ENCODE measurements at regions of chr10 and their contacts with region 1.

Region 1: DNA sequence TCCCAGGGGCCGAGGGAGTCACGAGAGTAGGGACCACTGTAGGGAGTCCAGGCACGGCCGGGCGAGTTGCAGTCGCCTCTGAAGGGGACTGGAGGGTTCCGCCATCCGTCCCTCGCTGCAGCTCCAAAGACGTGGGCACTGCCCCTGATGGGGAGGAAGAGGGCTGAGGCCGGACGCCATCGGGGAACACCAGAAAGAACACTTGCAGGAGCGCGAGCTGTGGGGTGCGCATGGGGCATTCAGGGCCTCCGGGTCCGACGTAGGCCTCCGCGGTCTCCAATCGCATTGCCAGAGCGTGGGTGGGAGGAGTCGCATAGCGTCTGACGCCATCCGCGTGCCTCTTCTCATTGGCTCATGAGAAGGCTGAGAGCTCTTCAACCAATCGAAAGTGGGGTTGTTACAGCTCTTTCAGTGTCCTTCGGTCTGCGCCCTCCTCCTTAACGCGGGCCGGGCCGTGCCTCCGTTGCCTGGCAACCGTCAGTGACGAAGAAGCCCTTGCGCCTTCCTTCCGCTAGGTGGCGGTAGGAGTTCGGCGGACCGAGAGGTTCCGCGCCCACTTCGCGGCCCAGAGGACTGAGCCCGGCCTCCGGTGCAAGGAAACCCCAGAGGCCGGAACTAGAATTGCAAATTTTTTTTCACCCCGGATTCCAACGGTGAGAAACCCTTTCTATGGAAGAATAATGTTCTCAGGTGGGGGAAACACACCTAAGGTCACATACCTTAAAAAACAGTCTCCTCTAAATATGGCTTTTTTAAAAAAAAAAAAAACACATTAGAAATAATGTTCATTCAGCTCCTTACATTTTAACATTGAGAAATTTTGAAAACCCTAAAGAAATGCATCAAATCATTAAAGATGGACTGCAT is at the start of gene TCTN3:
- DNase-seq: peak; percentile 97
- H3K4me3 Mint-ChIP-seq: peak within 1 kb of the TSS; percentile 96
- H3K27ac Mint-ChIP-seq: peak within 1 kb of the TSS; percentile 71
- H3K4me1 Mint-ChIP-seq: peaks cover 35% of the 10 kb centered on the region
- H3K27me3 Mint-ChIP-seq: no peaks in the 10 kb centered on the region
- total RNA-seq, gene TCTN3: 22.9 to 26.3 TPM

Region 2: DNA sequence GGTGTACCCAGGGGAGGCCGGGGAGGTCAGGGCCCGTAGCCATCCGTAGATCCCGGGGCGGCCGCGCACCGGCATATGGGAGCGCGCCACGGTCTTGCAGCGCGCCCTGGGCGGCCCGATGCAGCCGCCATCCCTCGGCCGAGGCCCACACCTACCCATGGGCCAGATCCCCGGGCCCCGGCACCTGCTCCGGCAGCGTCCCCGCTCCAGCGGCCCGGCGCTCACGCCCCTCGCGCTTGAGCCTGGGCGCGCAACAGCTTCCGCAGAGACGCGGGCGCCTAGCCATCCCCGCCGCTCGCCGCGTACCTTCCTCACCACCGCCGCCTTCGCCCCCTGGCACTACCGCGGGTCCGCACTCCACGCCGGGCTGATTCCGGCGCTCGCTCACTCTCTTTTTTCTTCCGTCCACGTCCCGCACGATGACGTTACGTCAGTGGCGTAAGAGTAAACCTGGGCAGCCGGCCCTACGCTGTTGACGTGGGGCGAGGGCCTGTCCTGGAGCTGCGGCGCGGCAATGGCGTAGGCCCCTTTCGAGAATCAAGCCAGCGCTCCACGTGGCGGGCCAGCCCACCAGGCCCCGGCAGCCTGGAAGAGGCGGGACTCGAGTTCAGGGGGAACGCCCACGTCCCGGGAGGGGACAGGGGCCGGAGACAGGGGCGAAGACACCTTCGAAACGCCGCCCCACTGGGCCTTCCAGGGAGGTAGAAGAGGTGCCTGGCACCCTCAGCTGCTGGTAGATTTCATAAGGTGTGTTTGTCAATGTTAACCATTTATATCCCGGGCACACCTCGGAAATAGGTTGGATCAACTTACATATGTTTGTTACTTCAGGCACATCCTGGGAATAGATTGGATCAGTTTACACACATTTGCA is 37.4 kb before region 1 on chr10 and contains the start of gene ALDH18A1:
- CTCF ChIA-PET with region 1: interaction called, 17 read pairs
- POLR2A ChIA-PET with region 1: interaction called, 8 read pairs
- intact Hi-C with region 1: loop called (anchors 1 kb)
- DNase-seq: peak; percentile 93
- H3K4me3 Mint-ChIP-seq: peak within 1 kb of the TSS; percentile 91
- H3K27ac Mint-ChIP-seq: peak within 1 kb of the TSS; percentile 80
- H3K4me1 Mint-ChIP-seq: peaks cover 25% of the 10 kb centered on the region
- H3K27me3 Mint-ChIP-seq: no peaks in the 10 kb centered on the region
- total RNA-seq, gene ALDH18A1: 68.6 to 69.5 TPM

Region 3: DNA sequence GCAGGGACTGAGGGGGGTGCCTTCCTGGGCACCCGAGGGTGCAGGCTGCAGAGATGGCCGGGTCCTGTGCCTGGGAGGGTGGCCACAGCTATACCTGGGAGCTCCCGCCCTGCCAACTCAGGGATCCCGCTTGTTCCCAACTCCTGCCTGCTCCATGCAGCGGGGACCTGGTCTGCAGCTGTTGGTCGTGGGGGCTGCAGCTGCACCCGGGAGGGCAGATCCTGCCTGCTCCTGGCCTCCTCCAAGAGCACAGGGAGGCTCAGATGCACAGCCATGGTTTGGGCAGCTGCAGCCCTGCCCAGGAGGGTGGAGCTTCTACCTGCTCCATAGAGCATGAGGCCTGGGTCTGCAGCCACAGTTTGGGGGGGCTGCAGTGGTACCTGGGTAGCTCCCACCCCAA is 13.1 kb after region 1 on chr10:
- CTCF ChIA-PET with region 1: interaction called, 10 read pairs
- POLR2A ChIA-PET with region 1: no interaction called
- intact Hi-C with region 1: no loop called
- DNase-seq: no peak
- H3K4me3 Mint-ChIP-seq: no peak overlapping the region
- H3K27ac Mint-ChIP-seq: no peak overlapping the region
- H3K4me1 Mint-ChIP-seq: no peaks in the 10 kb centered on the region
- H3K27me3 Mint-ChIP-seq: no peaks in the 10 kb centered on the region

Region 4: GRCh38 chr10:95832216-95833041 is 138.5 kb after region 1 on chr10:
- CTCF ChIA-PET with region 1: interaction called, 298 read pairs
- POLR2A ChIA-PET with region 1: interaction called, 6 read pairs
- intact Hi-C with region 1: loop called (anchors 2 kb)
- DNase-seq: peak; percentile 77
- H3K4me3 Mint-ChIP-seq: peak overlapping the region; percentile 72
- H3K27ac Mint-ChIP-seq: peak overlapping the region; percentile 90
- H3K4me1 Mint-ChIP-seq: peaks cover 37% of the 10 kb centered on the region
- H3K27me3 Mint-ChIP-seq: no peaks in the 10 kb centered on the region

Region 5: DNA sequence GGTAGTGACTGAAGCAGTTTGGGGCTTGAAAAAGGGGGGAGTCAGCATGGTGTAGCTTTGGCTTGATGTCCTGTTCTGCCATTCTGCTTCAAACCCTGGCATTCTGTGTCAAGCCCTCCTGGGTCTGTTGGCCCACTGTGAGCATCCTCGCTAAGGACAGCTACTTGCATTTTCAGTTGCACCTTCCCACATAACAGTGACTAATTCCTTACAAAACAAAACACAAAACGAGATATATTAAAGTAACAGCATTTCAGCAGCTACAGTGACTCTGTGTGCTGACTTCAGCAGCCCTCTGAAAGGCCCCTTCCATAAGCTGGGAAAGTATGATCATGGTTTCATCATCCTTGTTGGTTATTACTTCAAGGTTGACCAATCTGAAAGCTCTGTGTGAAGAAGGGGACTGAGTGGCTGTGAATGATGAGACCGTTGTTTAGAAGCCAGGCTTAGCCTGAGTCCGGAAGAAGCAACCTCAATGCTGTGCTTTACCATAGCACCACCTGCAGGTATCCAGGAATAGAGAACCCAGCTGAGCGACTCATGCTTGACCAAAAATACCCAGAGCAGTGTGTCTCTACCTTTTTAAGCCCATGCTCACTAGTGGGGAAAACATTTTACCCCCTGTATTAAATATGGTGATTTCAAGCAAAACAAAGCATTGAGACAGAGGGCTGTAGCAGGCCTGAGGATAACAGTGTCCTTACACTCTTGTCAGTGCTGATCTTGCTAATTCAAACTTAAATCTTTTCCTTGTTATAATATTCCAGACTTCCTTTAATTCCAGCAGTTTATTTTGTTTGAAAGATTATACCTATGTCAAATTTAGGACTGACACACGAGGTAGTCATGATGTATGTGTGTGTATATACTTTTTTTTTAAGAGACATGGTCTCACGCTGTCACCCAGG is 171.3 kb after region 1 on chr10:
- CTCF ChIA-PET with region 1: interaction called, 99 read pairs
- POLR2A ChIA-PET with region 1: interaction called, 13 read pairs
- intact Hi-C with region 1: loop called (anchors 1 kb)
- DNase-seq: peak; percentile 61
- H3K4me3 Mint-ChIP-seq: no peak overlapping the region
- H3K27ac Mint-ChIP-seq: peak overlapping the region; percentile 12
- H3K4me1 Mint-ChIP-seq: peaks cover 19% of the 10 kb centered on the region
- H3K27me3 Mint-ChIP-seq: no peaks in the 10 kb centered on the region

Region 6: GRCh38 chr10:95907456-95908253 is 213.8 kb after region 1 on chr10 and contains the start of gene CC2D2B:
- CTCF ChIA-PET with region 1: interaction called, 16 read pairs
- POLR2A ChIA-PET with region 1: interaction called, 3 read pairs
- intact Hi-C with region 1: loop called (anchors 1 kb)
- DNase-seq: peak; percentile 75
- H3K4me3 Mint-ChIP-seq: peak within 1 kb of the TSS; percentile 92
- H3K27ac Mint-ChIP-seq: peak within 1 kb of the TSS; percentile 89
- H3K4me1 Mint-ChIP-seq: peaks cover 12% of the 10 kb centered on the region
- H3K27me3 Mint-ChIP-seq: peaks cover 2% of the 10 kb centered on the region
- total RNA-seq, gene CC2D2B: 0.15 TPM in 1 of 2 experiments, not detected in the other

Region 7: DNA sequence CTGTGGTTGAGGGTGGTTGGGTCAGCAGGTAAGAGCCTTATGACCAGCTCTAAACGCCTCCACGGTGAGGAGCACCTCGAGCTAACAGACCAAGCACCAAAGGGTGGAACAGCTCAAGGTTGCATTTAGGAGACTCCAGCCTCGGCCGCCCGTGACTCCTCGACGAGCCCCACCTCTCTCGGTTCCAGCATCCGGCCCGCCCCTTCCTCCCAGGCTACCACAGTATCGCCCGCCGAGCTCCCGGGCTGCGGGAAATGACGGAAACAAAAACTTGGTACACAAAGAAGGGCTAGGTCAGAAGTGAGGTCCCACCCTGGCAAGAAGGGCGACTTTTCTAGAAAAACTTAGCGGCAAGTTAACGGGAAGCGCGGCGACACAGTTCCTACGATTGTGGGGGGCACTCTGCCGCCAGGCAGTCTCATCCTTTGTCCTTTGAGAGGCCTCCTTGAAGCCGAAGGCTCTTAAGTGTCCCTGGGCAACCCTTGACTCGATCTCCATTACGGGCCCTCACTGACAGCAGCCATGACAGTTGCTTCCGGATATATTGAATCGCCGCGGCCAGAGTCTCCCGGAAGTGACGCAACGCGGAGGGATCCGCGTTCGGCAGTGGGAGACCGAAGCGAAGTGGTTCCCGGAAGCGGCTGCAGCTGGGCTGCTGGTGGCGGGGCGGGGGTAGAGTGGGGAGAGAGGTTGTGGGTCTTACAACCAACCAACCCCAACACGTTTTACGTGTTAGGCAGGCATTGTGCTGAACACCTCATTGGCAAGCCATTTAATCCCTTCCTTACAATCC is 396.0 kb after region 1 on chr10:
- CTCF ChIA-PET with region 1: interaction called, 4 read pairs
- POLR2A ChIA-PET with region 1: interaction called, 3 read pairs
- intact Hi-C with region 1: loop called (anchors 1 kb)
- DNase-seq: peak; percentile 95
- H3K4me3 Mint-ChIP-seq: peak overlapping the region; percentile 95
- H3K27ac Mint-ChIP-seq: peak overlapping the region; percentile 99
- H3K4me1 Mint-ChIP-seq: peaks cover 12% of the 10 kb centered on the region
- H3K27me3 Mint-ChIP-seq: peaks cover 15% of the 10 kb centered on the region